HCT116 (cell line): ENCODE measurements at regions of chr10 and their contacts with region 1.

Region 1: GRCh38 chr10:77494327-77494726 is 143.3 kb downstream of the KCNMA1 start:
- DNase-seq: peak; percentile 32
- ATAC-seq: peak; percentile 82
- H3K4me3 ChIP-seq: no peak overlapping the region
- H3K27ac ChIP-seq: no peak overlapping the region
- H3K4me1 ChIP-seq: no peaks in the 10 kb centered on the region
- H3K27me3 ChIP-seq: no peaks in the 10 kb centered on the region
- CTCF ChIP-seq: peak; percentile 42 to 71 (median 65)
- POLR2A ChIP-seq: no peak
- RAD21 ChIP-seq: peak; percentile 88

Region 2: DNA sequence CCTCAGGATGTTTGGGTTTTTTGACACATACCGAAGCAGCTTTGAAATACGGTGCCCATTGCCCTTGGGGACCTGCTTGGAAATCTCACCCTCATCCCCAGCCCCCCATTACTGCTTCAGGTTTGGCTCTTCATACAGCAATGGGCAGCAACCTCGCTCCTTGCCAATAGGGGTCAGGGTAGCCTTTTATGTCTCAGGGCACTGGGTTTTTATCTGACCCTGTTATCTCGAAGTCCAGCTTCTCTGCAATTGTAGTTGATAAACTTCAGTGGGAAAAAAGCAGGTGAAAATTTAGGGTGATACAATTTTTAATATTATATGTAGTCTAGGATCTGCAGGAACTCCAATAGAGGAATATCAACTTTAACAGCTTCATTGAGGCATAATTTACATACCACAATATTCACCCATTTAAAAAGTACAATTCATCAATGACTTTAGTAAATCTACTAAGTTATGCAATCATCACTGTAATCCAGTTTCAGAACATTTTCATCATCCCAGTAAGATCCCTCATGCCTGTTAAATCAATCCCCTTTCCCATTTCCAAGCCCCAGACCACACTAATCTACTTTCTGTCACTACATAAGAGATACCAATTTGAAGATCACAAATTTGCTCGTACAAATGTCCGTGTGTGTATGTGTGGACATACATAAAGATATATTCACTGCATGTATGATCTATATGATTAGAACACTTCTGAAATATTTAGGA is 242.9 kb before region 1 on chr10:
- CTCF ChIA-PET with region 1: no interaction called
- POLR2A ChIA-PET with region 1: no interaction called
- RAD21 ChIA-PET with region 1: no interaction called
- intact Hi-C with region 1: loop called (anchors 10 kb)
- DNase-seq: peak; percentile 13
- ATAC-seq: peak; percentile 87
- H3K4me3 ChIP-seq: no peak overlapping the region
- H3K27ac ChIP-seq: no peak overlapping the region
- H3K4me1 ChIP-seq: no peaks in the 10 kb centered on the region
- H3K27me3 ChIP-seq: peaks cover 19% of the 10 kb centered on the region; the same call in 1 of the 2 replicates
- CTCF ChIP-seq: peak; percentile 56 to 79 (median 71)
- POLR2A ChIP-seq: no peak
- RAD21 ChIP-seq: peak; percentile 74

Region 3: GRCh38 chr10:77416311-77417135 is 77.8 kb before region 1 on chr10:
- CTCF ChIA-PET with region 1: no interaction called
- POLR2A ChIA-PET with region 1: no interaction called
- RAD21 ChIA-PET with region 1: no interaction called
- intact Hi-C with region 1: no loop called
- DNase-seq: no peak
- ATAC-seq: no peak
- H3K4me3 ChIP-seq: no peak overlapping the region
- H3K27ac ChIP-seq: no peak overlapping the region
- H3K4me1 ChIP-seq: no peaks in the 10 kb centered on the region
- H3K27me3 ChIP-seq: peaks cover 5% of the 10 kb centered on the region; the same call in 1 of the 2 replicates
- CTCF ChIP-seq: no peak
- POLR2A ChIP-seq: no peak
- RAD21 ChIP-seq: no peak

Region 4: DNA sequence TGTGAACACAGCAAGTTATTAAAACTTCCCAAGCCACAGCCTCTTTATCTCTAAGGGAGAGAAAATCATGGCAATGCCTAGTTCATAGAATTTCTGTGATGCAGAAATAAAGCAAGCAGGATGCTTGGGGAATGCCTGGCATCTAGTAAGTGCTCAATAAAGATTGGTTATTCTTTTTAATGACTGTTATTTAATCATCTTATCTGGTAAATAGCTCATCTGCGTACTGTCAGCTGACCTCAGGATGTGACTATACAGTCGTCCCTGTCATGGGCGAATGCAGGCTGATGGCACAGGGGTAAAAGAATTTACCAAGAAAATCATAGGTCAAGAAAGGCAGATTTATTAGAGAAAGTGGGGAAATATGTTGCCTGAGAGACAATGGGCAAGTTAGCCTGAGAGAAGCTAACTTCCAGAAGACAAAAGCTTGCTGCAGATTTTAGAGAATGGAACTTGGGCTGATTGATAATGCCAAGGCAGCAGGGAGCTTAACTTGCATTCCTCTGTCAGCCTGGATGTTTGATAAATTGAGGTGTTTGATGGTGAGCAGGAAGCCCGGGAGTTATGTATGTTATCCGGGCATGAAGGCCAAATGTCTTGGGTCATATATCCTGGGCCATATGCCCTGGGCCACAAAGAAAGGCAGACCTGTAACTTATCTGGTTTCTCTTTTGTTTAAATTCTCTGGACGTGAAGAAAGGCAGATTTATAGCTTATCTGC is 17.3 kb after region 1 on chr10:
- CTCF ChIA-PET with region 1: no interaction called
- POLR2A ChIA-PET with region 1: no interaction called
- RAD21 ChIA-PET with region 1: no interaction called
- intact Hi-C with region 1: no loop called
- DNase-seq: no peak
- ATAC-seq: no peak
- H3K4me3 ChIP-seq: no peak overlapping the region
- H3K27ac ChIP-seq: no peak overlapping the region
- H3K4me1 ChIP-seq: peaks cover 25 to 78% of the 10 kb centered on the region in 2 experiments
- H3K27me3 ChIP-seq: no peaks in the 10 kb centered on the region
- CTCF ChIP-seq: no peak
- POLR2A ChIP-seq: no peak
- RAD21 ChIP-seq: no peak

Region 5: GRCh38 chr10:77613476-77614130 is 119.3 kb after region 1 on chr10:
- CTCF ChIA-PET with region 1: no interaction called
- POLR2A ChIA-PET with region 1: no interaction called
- RAD21 ChIA-PET with region 1: no interaction called
- intact Hi-C with region 1: no loop called
- DNase-seq: no peak
- ATAC-seq: no peak
- H3K4me3 ChIP-seq: no peak overlapping the region
- H3K27ac ChIP-seq: no peak overlapping the region
- H3K4me1 ChIP-seq: no peaks in the 10 kb centered on the region
- H3K27me3 ChIP-seq: no peaks in the 10 kb centered on the region
- CTCF ChIP-seq: no peak
- POLR2A ChIP-seq: no peak
- RAD21 ChIP-seq: no peak